BJ (cell line): ENCODE measurements at regions of chr1 and their contacts with region 1.

Region 1: GRCh38 chr1:152047730-152048402 is 11.1 kb upstream of the S100A11 start:
- DNase-seq: peak; percentile 99
- H3K4me3 ChIP-seq: no peak overlapping the region; the same call in 1 of the 2 replicates
- H3K27me3 ChIP-seq: peaks cover 2% of the 10 kb centered on the region; the same call in 1 of the 2 replicates
- CTCF ChIP-seq: peak; percentile 74

Region 2: GRCh38 chr1:151898513-151898991 is 149.3 kb before region 1 on chr1:
- CTCF ChIA-PET with region 1: no interaction called
- POLR2A ChIA-PET with region 1: no interaction called
- DNase-seq: no peak
- H3K4me3 ChIP-seq: no peak overlapping the region
- H3K27me3 ChIP-seq: no peaks in the 10 kb centered on the region
- CTCF ChIP-seq: no peak

Region 3: GRCh38 chr1:152034646-152035405 is 13.0 kb before region 1 on chr1:
- CTCF ChIA-PET with region 1: interaction called, 61 read pairs
- POLR2A ChIA-PET with region 1: interaction called, 12 read pairs
- DNase-seq: no peak
- H3K4me3 ChIP-seq: peak overlapping the region; percentile 92
- H3K27me3 ChIP-seq: no peaks in the 10 kb centered on the region; the same call in 1 of the 2 replicates
- CTCF ChIP-seq: peak; percentile 78

Region 4: DNA sequence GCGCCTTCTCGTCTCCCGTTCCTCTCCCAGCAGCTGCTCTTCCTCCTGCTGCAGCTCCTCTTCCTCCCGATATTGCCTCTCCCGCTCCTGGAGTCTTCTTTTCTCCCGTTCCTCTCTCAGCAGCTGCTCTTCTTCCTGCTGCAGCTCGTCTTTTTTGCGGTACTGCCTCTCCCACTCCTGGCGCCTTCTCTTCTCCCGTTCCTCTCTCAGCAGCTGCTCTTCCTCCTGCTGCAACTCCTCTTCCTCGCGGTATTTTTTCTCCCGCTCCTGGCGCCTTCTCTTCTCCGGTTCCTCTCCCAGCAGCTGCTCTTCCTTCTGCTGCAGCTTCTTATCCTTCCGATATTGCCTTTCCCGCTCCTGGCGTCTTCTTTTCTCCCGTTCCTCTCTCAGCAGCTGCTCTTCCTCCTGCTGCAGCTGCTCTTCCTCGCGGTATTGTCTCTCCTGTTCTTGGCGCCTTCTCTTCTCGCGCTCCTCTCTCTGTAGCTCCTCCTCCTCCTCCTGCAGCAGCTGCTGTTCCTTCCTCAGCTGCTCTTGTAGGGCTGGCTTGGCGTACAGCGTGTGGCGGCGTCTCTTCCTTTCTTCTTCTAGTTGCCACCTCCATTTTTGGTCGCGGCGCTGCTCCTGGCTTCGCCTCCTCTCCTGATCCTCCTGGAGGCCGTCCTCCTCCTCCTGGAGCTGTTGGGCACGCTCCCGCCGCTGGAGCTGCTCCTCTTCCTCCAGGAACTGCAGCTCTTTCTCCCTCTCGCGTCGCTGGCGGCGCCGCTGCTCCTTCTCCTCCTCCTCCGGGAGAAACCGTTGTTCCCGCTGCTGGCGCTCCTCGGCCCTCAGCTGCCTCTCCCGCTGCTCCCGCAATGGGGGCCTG is 62.4 kb after region 1 on chr1:
- CTCF ChIA-PET with region 1: interaction called, 13 read pairs
- POLR2A ChIA-PET with region 1: no interaction called
- DNase-seq: no peak
- H3K4me3 ChIP-seq: peak overlapping the region; percentile 43
- H3K27me3 ChIP-seq: peaks cover 47% of the 10 kb centered on the region
- CTCF ChIP-seq: no peak

Region 5: DNA sequence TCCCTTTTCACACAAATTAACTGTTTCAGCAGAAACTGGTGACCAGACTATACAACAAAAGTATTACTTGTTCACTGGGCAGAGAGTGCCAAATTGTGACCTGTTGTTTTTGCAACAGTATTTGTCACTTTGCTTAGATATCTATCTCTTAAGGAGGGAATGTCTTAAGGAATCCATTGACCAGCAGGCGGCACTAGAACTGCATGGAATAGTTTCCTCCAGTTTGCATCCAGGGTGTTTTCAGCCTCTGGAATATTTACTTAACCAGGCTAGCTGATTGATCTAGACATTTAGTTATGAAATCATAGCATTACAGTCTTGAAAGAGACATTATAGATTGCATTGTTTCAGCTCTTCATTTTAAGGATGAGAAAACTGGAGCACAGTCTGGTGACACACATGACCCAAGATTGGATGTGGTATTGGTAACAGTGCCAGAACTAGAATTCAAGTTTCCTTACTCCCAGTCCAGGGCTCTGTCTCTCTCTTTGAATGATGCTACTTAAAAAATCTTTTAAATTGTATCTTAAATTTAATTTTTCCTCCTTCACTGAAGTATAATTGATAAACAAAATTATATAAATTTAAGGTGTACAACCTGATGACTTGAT is 94.2 kb after region 1 on chr1:
- CTCF ChIA-PET with region 1: interaction called, 14 read pairs
- POLR2A ChIA-PET with region 1: no interaction called
- DNase-seq: no peak
- H3K4me3 ChIP-seq: no peak overlapping the region
- H3K27me3 ChIP-seq: peaks cover 5% of the 10 kb centered on the region; the same call in 1 of the 2 replicates
- CTCF ChIP-seq: peak; percentile 86

Region 6: DNA sequence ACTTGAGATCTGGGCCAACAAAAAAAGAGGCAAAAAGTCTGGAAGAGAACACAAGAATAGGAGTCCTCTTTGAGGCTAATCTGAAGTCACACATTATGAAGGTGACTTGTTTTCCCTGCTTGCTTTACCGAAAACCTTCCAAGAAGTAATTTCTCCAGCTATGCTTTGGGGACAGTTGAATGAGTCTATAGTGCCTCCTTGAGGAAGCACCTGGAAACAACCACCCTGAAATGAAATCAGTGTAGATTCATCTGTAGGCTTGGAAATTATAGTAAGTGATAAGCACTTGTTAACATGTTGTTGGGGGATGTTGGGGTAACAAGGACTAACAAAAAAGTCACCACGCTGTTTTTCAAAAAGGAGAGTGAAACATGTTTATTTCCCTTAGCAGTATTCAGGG is 134.6 kb after region 1 on chr1:
- CTCF ChIA-PET with region 1: interaction called, 69 read pairs
- POLR2A ChIA-PET with region 1: no interaction called
- DNase-seq: no peak
- H3K4me3 ChIP-seq: no peak overlapping the region
- H3K27me3 ChIP-seq: no peaks in the 10 kb centered on the region; the same call in 1 of the 2 replicates
- CTCF ChIP-seq: peak; percentile 47

Region 7: GRCh38 chr1:152386940-152387339 is 339.1 kb after region 1 on chr1:
- CTCF ChIA-PET with region 1: no interaction called
- POLR2A ChIA-PET with region 1: no interaction called
- DNase-seq: no peak
- H3K4me3 ChIP-seq: no peak overlapping the region
- H3K27me3 ChIP-seq: no peaks in the 10 kb centered on the region
- CTCF ChIP-seq: no peak